ENCODE measurements at regions of chr6 and their contacts with region 1.

Region 1: GRCh38 chr6:73520688-73521350 is at the start of gene EEF1A1:
- DNase-seq: peak; percentile 100
- ATAC-seq: peak; percentile 97
- total RNA-seq, gene EEF1A1: 6,940 TPM

Region 2: DNA sequence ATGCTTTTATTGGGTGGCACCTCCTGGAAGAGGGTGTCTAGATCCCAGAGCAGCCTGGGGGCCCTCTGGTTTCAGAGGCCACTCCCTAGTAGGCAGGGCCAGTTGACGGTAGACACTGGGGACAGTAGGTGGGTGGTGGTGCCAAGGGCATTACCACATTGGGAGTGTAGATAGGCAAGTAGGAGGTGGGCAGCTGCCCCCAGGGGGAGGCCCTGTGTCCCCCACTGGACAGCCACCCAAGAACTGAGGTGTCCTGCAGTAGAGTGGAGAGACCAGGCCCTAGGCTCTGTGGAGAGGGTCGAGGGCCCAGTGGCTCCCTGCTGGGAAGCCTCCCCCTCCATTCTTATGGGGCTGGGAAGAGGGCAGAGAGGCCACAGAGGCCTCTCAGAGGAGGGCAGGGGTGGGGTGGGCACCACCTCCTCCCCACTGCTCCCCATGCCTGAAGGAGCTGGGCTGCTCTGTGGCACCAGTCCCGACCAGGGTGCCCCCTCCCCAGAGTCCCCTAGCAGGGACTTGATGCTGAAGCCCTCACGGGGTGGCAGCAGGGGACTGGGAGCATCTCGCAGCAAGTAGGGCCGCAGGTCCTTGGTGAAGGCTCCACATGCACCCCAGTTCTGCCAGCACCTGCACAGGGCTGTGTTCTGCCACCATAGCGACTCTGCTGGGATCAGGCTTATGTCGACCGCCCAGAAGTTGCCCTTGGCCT is 1204.0 kb before region 1 on chr6:
- intact Hi-C with region 1: loop called (anchors 5 kb)
- DNase-seq: no peak
- ATAC-seq: peak; percentile 26

Region 3: DNA sequence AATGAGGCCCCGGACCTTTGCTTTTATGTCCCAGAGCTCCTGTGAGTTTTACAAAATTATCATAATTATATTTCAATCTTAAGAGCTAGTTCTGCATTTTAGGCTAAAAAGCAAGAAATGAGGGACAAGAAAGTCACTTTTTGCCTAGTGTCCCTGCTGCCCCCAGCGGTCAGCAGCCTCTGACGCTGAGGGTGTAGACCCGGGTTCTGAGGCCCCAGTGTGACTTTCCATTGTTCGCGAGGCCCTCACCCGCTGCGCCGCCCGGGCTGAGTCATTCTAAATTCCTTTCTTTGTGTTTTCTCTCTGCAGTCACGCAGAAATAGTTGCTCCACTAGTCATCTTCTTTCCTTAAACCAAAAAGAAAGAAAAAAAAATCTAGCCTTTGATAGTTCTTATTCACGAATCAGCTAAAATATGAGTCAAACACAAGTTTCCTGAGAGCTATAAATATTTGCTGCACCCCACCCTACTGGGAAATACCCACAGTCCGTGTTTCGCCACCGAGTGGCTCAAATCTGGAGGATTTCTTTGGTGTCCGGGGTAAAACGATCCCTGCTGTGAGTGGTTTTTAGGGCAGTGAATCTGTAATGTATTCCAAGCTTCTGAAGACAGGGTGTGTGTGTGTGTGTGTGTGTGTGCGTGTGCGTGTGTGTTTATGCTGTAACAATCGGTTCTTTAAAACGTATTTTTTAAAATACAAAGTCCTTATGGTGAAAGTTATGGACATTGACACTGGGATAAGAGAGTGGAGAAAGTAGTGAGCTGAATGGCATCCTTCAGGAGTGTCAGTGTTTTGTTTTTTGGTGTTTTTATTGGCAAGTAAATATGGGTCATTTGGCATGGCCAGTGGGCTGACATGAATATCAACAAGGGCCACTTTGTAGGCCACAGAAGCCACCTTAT is 59.7 kb after region 1 on chr6:
- intact Hi-C with region 1: loop called (anchors 10 kb)
- DNase-seq: peak; percentile 90
- ATAC-seq: peak; percentile 94

Region 4: GRCh38 chr6:73610444-73611275 is 89.8 kb after region 1 on chr6:
- intact Hi-C with region 1: loop called (anchors 5 kb)
- DNase-seq: no peak
- ATAC-seq: peak; percentile 68

Region 5: DNA sequence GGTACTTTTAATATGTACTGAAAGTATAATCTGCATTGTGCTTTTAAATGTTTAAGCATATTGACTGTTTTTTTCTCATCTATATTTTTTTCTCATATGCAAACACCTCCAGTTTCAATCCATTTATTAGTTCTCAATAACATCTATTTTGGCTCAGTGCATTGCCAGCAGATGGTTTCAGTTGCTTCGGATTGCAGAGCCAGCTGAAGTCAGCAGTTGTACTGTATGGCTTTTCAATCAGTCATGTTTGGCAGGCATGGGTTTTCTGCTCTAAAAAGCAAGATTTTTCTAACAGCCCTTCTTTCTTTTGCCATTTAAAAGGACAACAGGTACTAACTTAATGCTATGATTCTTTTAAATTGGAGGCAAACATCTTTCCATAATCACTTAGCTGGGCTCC is 296.4 kb after region 1 on chr6:
- intact Hi-C with region 1: no loop called
- DNase-seq: no peak
- ATAC-seq: no peak

Region 6: GRCh38 chr6:75171567-75171966 is 1650.7 kb after region 1 on chr6:
- intact Hi-C with region 1: no loop called
- DNase-seq: no peak
- ATAC-seq: no peak